IMR-90 (cell line): ENCODE measurements at regions of chr4 and their contacts with region 1.

Region 1: DNA sequence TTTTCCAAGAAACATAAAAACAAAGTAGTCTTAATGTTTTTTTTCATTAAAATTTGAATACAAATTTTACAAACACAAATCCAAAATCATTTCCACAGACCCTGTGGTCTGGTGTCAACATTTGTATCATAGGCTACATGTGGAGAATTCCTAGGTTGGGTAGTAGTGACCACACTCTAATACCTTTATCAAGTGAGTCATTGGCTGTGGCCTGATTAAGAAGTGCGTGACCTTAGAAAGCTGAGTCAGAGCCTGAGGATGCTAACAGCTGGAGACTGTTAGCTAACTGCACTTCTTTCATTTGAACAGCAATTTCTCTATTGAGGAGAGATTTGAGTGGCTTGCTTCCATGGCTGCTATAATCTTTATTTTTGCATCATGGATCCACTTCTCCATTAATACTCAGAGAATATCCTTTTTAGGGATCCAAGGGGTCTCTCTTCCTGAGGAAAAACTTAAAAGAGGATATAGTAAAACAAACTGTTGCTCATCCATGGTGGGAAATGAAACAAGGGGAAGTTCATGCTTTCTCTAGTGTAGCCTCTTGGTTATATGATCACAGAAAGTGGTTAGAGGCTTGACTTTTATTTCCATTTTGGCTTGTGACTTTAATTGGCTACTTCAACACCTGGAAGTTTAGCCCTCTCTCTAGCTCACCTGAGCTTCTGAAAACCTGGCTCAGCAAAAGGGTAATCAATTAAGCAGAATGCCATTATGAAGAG is 335.8 kb downstream of the PABPC4L start:
- DNase-seq: peak; percentile 99
- ATAC-seq: peak; percentile 97
- H3K4me3 ChIP-seq: no peak overlapping the region
- H3K27ac ChIP-seq: peak overlapping the region; percentile 78
- H3K4me1 ChIP-seq: peaks cover 7% of the 10 kb centered on the region
- H3K27me3 ChIP-seq: no peaks in the 10 kb centered on the region
- CTCF ChIP-seq: no peak
- POLR2A ChIP-seq: no peak
- RAD21 ChIP-seq: no peak

Region 2: GRCh38 chr4:133802359-133803140 is 63.2 kb before region 1 on chr4:
- CTCF ChIA-PET with region 1: no interaction called
- POLR2A ChIA-PET with region 1: no interaction called
- dilution Hi-C with region 1: no loop called
- in situ Hi-C with region 1: no loop called
- intact Hi-C with region 1: loop called (anchors 2 kb)
- DNase-seq: peak; percentile 75
- ATAC-seq: peak; percentile 71
- H3K4me3 ChIP-seq: no peak overlapping the region
- H3K27ac ChIP-seq: peak overlapping the region; percentile 62; the same call in 1 of the 2 replicates
- H3K4me1 ChIP-seq: no peaks in the 10 kb centered on the region
- H3K27me3 ChIP-seq: no peaks in the 10 kb centered on the region
- CTCF ChIP-seq: no peak
- POLR2A ChIP-seq: no peak
- RAD21 ChIP-seq: no peak

Region 3: GRCh38 chr4:135598151-135598550 is 1732.4 kb after region 1 on chr4:
- CTCF ChIA-PET with region 1: no interaction called
- POLR2A ChIA-PET with region 1: no interaction called
- dilution Hi-C with region 1: no loop called
- in situ Hi-C with region 1: no loop called
- intact Hi-C with region 1: no loop called
- DNase-seq: no peak
- ATAC-seq: no peak
- H3K4me3 ChIP-seq: no peak overlapping the region
- H3K27ac ChIP-seq: no peak overlapping the region
- H3K4me1 ChIP-seq: no peaks in the 10 kb centered on the region
- H3K27me3 ChIP-seq: no peaks in the 10 kb centered on the region
- CTCF ChIP-seq: no peak
- POLR2A ChIP-seq: no peak
- RAD21 ChIP-seq: no peak